ENCODE measurements at regions of chrX and their contacts with region 1.

Region 1: GRCh38 chrX:69216911-69217310 is 51.7 kb upstream of the PJA1 start:
- DNase-seq: no peak
- ATAC-seq: peak; percentile 40 to 67

Region 2: GRCh38 chrX:69060631-69061408 is 156.1 kb before region 1 on chrX:
- intact Hi-C with region 1: loop called in 1 of 2 experiments (anchors 10 kb)
- DNase-seq: peak; percentile 34
- ATAC-seq: peak; percentile 82 to 85

Region 3: GRCh38 chrX:69093960-69094871 is 122.7 kb before region 1 on chrX:
- intact Hi-C with region 1: loop called (anchors 10 kb)
- DNase-seq: peak; percentile 28
- ATAC-seq: peak; percentile 13 to 60

Region 4: GRCh38 chrX:69143530-69143929 is 73.4 kb before region 1 on chrX:
- intact Hi-C with region 1: no loop called
- DNase-seq: no peak
- ATAC-seq: no peak

Measured in left cardiac atrium (tissue), 4 donors.